OCI-LY7 (cell line): ENCODE measurements at regions of chr14 and their contacts with region 1.

Region 1: GRCh38 chr14:50599700-50600444 is 39.9 kb downstream of the ATL1 start:
- DNase-seq: peak; percentile 45
- H3K4me3 ChIP-seq: no peak overlapping the region
- H3K27ac ChIP-seq: no peak overlapping the region
- H3K4me1 ChIP-seq: no peaks in the 10 kb centered on the region
- CTCF ChIP-seq: peak; percentile 87

Region 2: GRCh38 chr14:50191499-50191898 is 408.4 kb before region 1 on chr14:
- CTCF ChIA-PET with region 1: no interaction called
- POLR2A ChIA-PET with region 1: interaction called, 14 read pairs
- intact Hi-C with region 1: no loop called
- DNase-seq: peak; percentile 39
- H3K4me3 ChIP-seq: no peak overlapping the region
- H3K27ac ChIP-seq: no peak overlapping the region
- H3K4me1 ChIP-seq: peaks cover 10% of the 10 kb centered on the region
- CTCF ChIP-seq: no peak

Region 3: DNA sequence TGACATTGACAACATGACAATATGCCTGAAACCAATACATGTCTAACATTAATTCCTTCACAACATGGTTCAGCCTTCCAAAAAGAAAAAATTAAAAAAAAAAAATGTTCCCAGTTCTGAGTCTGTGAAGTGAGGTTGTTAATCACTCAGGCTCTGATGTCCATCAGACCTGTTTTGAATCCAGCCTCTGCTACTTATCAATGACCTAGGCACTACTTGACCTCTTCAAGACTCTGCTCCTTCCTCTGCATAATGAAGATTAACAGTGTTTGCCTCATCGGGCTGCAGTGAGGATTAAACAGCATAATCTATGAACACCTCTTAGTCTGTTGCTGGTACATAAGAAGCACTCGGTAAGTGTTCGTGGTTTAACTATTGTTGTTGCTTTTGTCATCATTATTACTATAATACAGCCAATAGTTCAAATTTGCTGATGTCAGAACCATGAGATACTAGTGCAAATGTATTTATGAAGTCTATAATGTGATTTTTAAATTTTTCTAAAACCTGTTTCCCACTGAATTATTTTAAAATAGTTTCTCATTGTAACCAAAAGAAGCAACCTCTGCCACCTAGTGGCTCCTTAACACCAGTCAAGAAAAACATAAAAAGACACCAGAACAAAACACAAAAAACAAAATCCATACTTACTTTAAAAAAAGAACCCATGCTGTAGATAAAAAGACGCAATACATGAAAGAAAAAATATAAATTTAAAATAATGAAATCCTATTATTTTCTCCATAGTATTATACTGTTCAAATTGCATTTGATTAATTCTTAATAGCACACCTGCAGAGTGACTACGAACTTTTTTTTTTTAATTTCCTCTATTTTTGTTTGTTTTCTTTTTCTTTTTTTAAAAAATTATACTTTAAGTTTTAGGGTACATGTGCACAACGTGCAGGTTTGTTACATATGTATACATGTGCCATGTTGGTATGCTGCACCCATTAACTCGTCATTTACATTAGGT is 619.9 kb after region 1 on chr14:
- CTCF ChIA-PET with region 1: no interaction called
- POLR2A ChIA-PET with region 1: no interaction called
- intact Hi-C with region 1: loop called (anchors 10 kb)
- DNase-seq: peak; percentile 30
- H3K4me3 ChIP-seq: no peak overlapping the region
- H3K27ac ChIP-seq: no peak overlapping the region
- H3K4me1 ChIP-seq: no peaks in the 10 kb centered on the region
- CTCF ChIP-seq: peak; percentile 85

Region 4: GRCh38 chr14:51239813-51240803 is 640.2 kb after region 1 on chr14 and contains the start of gene TMX1:
- CTCF ChIA-PET with region 1: no interaction called
- POLR2A ChIA-PET with region 1: no interaction called
- intact Hi-C with region 1: no loop called
- DNase-seq: peak; percentile 97
- H3K4me3 ChIP-seq: peak within 1 kb of the TSS; percentile 98
- H3K27ac ChIP-seq: peak within 1 kb of the TSS; percentile 60
- H3K4me1 ChIP-seq: peaks cover 44% of the 10 kb centered on the region
- CTCF ChIP-seq: peak; percentile 37; the same call in 1 of the 2 replicates
- total RNA-seq, gene TMX1: 33.6 and 34.3 TPM in 2 replicates